Common myeloid progenitor, CD34-positive (primary cell): ENCODE measurements at regions of chr1 and their contacts with region 1.

Region 1: GRCh38 chr1:94805912-94806311 is 14.2 kb upstream of the SLC44A3 start:
- DNase-seq: peak; percentile 58 to 78 (median 73)
- H3K4me3 ChIP-seq: peak overlapping the region in 1 of 7 experiments; percentile 18
- H3K27ac ChIP-seq: no peak overlapping the region
- H3K4me1 ChIP-seq: peaks cover 28 to 50% (median 34%) of the 10 kb centered on the region in 4 experiments
- H3K27me3 ChIP-seq: no peaks in the 10 kb centered on the region

Region 2: GRCh38 chr1:94463765-94464330 is 342.1 kb before region 1 on chr1:
- CTCF ChIA-PET with region 1: interaction called, 12 read pairs
- POLR2A ChIA-PET with region 1: no interaction called
- DNase-seq: peak; percentile 62 to 82 (median 78)
- H3K4me3 ChIP-seq: no peak overlapping the region
- H3K27ac ChIP-seq: no peak overlapping the region
- H3K4me1 ChIP-seq: peaks cover 0 to 13% (median under 1%) of the 10 kb centered on the region in 4 experiments
- H3K27me3 ChIP-seq: no peaks in the 10 kb centered on the region

Region 3: GRCh38 chr1:94475232-94475631 is 330.7 kb before region 1 on chr1:
- CTCF ChIA-PET with region 1: interaction called, 95 read pairs
- POLR2A ChIA-PET with region 1: no interaction called
- DNase-seq: no peak
- H3K4me3 ChIP-seq: no peak overlapping the region
- H3K27ac ChIP-seq: no peak overlapping the region
- H3K4me1 ChIP-seq: peaks cover 0 to 3% (median 0%) of the 10 kb centered on the region in 4 experiments
- H3K27me3 ChIP-seq: no peaks in the 10 kb centered on the region

Region 4: GRCh38 chr1:94481473-94481933 is 324.4 kb before region 1 on chr1:
- CTCF ChIA-PET with region 1: interaction called, 95 read pairs
- POLR2A ChIA-PET with region 1: interaction called, 3 read pairs
- DNase-seq: peak; percentile 61 to 79 (median 77)
- H3K4me3 ChIP-seq: no peak overlapping the region
- H3K27ac ChIP-seq: no peak overlapping the region
- H3K4me1 ChIP-seq: no peaks in the 10 kb centered on the region
- H3K27me3 ChIP-seq: no peaks in the 10 kb centered on the region

Region 5: DNA sequence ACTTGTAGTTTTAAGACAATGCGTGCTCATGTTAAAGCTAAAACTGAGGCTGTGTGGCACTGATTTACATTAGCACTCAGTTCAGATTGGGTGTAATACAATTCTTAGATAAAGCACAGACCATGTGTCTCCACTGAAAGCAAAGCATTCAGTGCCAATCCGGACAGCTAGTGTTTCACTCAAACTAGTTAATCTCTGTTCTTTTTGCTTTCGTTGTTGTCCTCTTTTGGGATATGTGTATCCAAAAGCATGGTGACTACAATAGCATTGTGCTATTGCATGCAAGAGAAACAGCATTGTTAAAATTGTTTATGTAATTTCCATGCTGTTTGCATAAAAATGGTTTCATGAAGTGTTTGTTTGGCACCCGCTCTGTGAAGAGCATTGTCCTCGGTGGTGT is 318.9 kb before region 1 on chr1:
- CTCF ChIA-PET with region 1: interaction called, 95 read pairs
- POLR2A ChIA-PET with region 1: interaction called, 3 read pairs
- DNase-seq: no peak
- H3K4me3 ChIP-seq: no peak overlapping the region
- H3K27ac ChIP-seq: no peak overlapping the region
- H3K4me1 ChIP-seq: no peaks in the 10 kb centered on the region
- H3K27me3 ChIP-seq: no peaks in the 10 kb centered on the region

Region 6: DNA sequence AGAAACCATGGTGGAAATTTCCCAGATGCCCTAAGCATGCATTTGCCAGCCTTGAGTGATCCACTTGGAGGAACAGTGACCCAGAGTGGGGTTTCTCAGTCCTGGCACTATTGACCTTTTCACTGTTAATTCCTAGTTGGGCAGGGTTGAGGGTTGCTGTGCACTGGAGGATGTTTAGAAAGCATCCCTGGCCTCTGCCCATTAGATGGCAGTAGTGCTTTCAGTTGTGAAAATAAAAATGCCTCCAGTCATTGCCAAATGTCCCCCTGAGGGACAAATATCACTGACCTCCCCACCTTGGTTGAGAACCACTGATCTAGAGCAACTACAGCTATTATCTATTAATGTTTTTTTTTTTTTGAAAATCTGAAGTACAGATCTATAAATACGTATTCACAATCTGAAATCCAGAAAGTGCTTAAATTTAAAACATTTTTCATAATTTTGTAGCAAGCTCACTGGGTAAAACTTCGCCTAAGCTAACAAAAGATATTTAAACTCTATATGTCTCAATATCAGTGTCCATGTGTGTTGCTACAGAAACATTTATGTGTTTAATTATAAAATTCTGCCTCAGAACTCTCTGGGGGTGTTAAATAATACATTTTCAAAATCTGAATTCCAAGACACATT is 291.7 kb before region 1 on chr1:
- CTCF ChIA-PET with region 1: interaction called, 321 read pairs
- POLR2A ChIA-PET with region 1: no interaction called
- DNase-seq: peak; percentile 28 to 49 (median 37)
- H3K4me3 ChIP-seq: no peak overlapping the region
- H3K27ac ChIP-seq: no peak overlapping the region
- H3K4me1 ChIP-seq: peaks cover 0 to 7% (median 1%) of the 10 kb centered on the region in 4 experiments
- H3K27me3 ChIP-seq: no peaks in the 10 kb centered on the region

Region 7: GRCh38 chr1:94707321-94708298 is 98.3 kb before region 1 on chr1:
- CTCF ChIA-PET with region 1: no interaction called
- POLR2A ChIA-PET with region 1: no interaction called
- DNase-seq: no peak
- H3K4me3 ChIP-seq: no peak overlapping the region
- H3K27ac ChIP-seq: no peak overlapping the region
- H3K4me1 ChIP-seq: peaks cover 0 to 16% (median 7%) of the 10 kb centered on the region in 4 experiments
- H3K27me3 ChIP-seq: no peaks in the 10 kb centered on the region

Region 8: GRCh38 chr1:94821636-94822305 is 15.9 kb after region 1 on chr1:
- CTCF ChIA-PET with region 1: interaction called, 12 read pairs
- POLR2A ChIA-PET with region 1: no interaction called
- DNase-seq: no peak
- H3K4me3 ChIP-seq: no peak overlapping the region
- H3K27ac ChIP-seq: no peak overlapping the region
- H3K4me1 ChIP-seq: peaks cover 2 to 14% (median 12%) of the 10 kb centered on the region in 4 experiments
- H3K27me3 ChIP-seq: peaks cover 19 to 65% (median 43%) of the 10 kb centered on the region in 5 experiments

Region 9: DNA sequence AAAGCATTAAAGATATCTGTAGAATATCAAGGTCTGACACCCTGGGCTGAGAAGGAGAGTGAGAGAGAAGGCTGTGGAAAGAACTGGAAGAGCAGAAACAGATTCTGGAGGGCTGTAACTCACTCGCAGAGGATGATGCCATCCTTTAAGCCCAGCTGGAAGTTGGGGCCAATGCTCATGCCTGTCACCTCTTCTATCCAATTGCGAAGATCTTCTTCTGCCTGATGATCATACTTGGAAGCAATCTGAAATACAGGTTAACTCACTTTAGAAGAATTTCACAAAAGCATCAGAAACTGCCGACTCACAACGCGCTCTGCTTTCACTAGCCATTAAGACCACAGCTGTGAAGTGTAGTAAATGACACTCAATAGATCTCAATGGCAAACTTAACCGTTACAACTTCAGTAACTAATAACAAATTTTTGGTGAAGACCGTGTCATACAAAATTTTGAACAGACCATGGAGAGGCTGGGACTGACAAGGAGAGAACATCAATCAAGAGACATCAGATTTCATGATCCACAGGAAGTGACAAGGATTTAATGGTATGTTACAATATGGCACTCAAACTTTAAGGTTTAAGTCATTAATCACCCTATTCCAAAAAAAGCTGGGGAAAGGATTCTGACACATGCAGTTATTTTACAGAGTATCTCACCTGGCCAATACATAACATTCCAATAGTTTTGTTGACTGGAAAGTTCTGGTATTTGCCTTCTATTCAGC is 97.5 kb after region 1 on chr1:
- CTCF ChIA-PET with region 1: no interaction called
- POLR2A ChIA-PET with region 1: no interaction called
- DNase-seq: no peak
- H3K4me3 ChIP-seq: no peak overlapping the region
- H3K27ac ChIP-seq: no peak overlapping the region
- H3K4me1 ChIP-seq: no peaks in the 10 kb centered on the region
- H3K27me3 ChIP-seq: no peaks in the 10 kb centered on the region

Region 10: GRCh38 chr1:94936861-94937620 is 131.1 kb after region 1 on chr1:
- CTCF ChIA-PET with region 1: no interaction called
- POLR2A ChIA-PET with region 1: no interaction called
- DNase-seq: no peak
- H3K4me3 ChIP-seq: no peak overlapping the region
- H3K27ac ChIP-seq: no peak overlapping the region
- H3K4me1 ChIP-seq: peaks cover 0 to 5% (median 0%) of the 10 kb centered on the region in 4 experiments
- H3K27me3 ChIP-seq: no peaks in the 10 kb centered on the region

Region 11: DNA sequence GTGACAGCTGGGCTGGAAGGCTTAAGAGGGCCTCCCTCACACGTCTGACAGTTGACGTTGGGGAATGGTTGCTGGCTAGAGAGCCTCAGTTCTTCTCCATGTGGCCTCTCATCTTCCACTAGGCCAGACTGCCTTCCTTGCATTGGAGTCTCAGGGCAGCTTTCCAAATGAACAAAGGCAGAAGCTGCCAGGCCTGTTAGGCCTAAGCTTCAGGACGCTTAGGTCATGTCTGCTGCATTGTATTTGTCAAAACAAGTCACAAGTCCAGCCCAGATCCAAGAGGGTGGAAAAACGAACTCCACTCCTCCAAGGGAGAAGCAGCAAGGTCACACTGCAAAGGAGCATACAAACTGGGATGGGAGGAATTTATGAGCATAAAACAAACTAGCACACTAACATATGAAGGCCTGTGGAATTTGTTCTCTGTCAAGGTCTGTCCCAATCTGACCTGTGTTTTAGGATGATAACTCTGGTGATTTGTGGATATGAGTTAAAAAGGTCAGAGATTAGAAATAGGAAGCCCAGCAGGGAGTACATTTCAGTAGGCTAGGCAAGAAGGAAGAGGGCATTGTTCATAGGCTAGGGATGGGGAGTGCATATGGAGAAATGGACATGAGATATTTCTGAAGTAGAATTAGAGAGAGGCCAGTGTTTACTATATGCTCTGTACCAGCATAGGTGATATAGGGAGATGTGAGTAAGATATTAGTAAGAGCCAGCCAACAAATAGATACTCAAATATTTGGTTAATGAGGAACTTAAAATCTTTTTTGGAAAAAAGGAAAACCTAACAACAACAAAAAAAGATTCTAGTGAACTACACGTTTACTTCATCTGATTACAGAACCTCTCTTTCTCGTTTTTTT is 150.1 kb after region 1 on chr1:
- CTCF ChIA-PET with region 1: no interaction called
- POLR2A ChIA-PET with region 1: no interaction called
- DNase-seq: no peak
- H3K4me3 ChIP-seq: no peak overlapping the region
- H3K27ac ChIP-seq: no peak overlapping the region
- H3K4me1 ChIP-seq: peaks cover 0 to under 1% (median 0%) of the 10 kb centered on the region in 4 experiments
- H3K27me3 ChIP-seq: no peaks in the 10 kb centered on the region